ENCODE measurements at regions of chr1 and their contacts with region 1.

Region 1: DNA sequence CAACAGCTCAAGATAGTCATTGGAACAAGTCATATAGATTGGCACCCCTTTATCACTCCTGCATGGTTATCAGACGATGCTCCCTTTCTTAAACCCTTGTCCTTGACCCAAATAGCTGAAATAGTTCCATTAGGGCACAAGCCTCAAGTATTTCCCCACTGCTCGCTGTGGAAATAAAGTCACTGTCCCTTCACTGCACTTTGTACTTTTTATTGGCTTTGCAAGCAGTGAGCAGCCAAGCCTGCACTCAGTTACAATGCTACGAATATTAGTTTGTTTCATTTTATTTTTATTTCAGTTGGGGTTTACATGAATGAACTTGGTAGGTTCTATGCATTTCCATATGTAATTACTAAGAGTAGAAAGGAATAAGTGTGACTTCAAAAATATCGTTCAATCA is 1176.4 kb downstream of the BRINP3 start:
- DNase-seq: no peak
- H3K4me3 ChIP-seq: no peak overlapping the region
- H3K27ac ChIP-seq: no peak overlapping the region
- H3K4me1 ChIP-seq: no peaks in the 10 kb centered on the region
- H3K27me3 ChIP-seq: no peaks in the 10 kb centered on the region
- CTCF ChIP-seq: no peak

Region 2: GRCh38 chr1:189313488-189313887 is 12.3 kb after region 1 on chr1:
- CTCF ChIA-PET with region 1: no interaction called
- POLR2A ChIA-PET with region 1: no interaction called
- intact Hi-C with region 1: loop called (anchors 2 kb)
- DNase-seq: no peak
- H3K4me3 ChIP-seq: no peak overlapping the region
- H3K27ac ChIP-seq: no peak overlapping the region
- H3K4me1 ChIP-seq: no peaks in the 10 kb centered on the region
- H3K27me3 ChIP-seq: no peaks in the 10 kb centered on the region
- CTCF ChIP-seq: no peak

Measured in A673 (cell line).